ENCODE measurements at regions of chr5 and their contacts with region 1.

Region 1: DNA sequence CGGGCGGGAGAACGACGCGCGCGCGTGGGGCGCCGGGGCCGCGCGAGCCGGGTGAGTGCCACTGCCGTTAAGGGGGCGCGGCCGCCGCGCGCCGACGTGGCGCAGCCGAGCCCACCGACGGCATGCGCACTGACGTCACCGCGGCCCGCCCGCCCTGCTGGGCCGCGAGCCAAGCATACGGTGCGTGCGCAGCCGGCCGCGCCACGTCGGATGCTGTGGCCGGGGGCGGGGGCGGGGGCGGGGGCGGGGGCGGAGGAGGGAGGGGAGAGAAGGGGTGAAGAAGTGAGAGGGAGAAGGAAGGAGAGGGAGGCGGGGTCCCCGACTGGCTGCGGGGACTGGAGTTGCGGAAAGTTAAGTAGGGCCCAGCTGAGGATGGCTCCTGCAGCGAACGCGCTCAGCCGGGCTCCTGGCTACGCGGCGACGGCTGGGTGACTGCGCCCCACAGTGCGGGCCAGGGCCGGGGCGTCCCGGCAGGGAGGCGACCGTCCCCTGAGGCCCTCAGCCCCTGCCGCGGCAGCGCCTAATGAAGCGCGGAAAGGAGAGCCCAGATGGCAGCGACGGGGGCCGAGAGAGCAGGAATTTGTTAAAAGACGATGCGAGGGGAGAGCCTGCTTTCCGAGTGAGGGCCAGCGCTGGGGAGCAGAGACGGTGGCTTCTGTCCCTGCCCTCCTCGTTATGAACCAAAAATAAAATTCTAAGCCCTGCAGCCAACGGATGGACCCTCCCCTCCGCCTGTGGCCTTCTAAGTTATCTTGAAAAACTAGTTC is at the start of gene DAP:
- DNase-seq: peak; percentile 88
- ATAC-seq: peak; percentile 88
- H3K4me3 ChIP-seq: peak within 1 kb of the TSS; percentile 96
- H3K27ac ChIP-seq: peak within 1 kb of the TSS; percentile 99
- H3K4me1 ChIP-seq: peaks cover 27% of the 10 kb centered on the region
- H3K27me3 ChIP-seq: no peaks in the 10 kb centered on the region
- CTCF ChIP-seq: no peak
- POLR2A ChIP-seq: peak; percentile 87
- RAD21 ChIP-seq: no peak
- total RNA-seq, gene DAP: 44.4 and 49.6 TPM in 2 replicates

Region 2: DNA sequence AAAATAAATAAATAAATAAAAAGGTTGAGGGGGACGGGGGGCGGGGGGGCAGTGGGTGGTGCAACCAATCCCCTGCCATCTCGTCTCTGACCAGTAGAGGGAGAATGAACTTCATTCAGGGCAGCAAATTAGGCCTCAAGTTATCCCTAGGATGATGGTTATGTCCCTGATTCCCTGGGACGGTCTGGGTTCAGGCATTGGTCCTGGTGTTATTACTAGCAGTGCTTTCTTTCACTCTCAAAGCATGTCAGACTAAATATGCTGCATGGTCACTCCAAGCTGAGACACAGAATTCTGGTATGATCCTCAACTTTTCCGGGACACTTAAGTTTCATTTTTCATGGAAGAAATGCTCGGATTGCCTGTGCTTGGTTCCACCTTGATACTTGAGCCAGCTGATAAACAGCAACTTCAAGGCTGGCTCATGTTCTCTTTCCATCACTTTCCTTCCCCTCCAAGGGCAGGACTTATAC is 59.7 kb before region 1 on chr5:
- CTCF ChIA-PET with region 1: interaction called, 5 read pairs
- POLR2A ChIA-PET with region 1: no interaction called
- dilution Hi-C with region 1: no loop called
- in situ Hi-C with region 1: no loop called
- intact Hi-C with region 1: loop called (anchors 2 kb)
- DNase-seq: peak; percentile 71
- ATAC-seq: peak; percentile 57
- H3K4me3 ChIP-seq: no peak overlapping the region
- H3K27ac ChIP-seq: peak overlapping the region; percentile 44
- H3K4me1 ChIP-seq: peaks cover 28% of the 10 kb centered on the region
- H3K27me3 ChIP-seq: no peaks in the 10 kb centered on the region
- CTCF ChIP-seq: peak; percentile 50
- POLR2A ChIP-seq: no peak
- RAD21 ChIP-seq: peak; percentile 64

Region 3: DNA sequence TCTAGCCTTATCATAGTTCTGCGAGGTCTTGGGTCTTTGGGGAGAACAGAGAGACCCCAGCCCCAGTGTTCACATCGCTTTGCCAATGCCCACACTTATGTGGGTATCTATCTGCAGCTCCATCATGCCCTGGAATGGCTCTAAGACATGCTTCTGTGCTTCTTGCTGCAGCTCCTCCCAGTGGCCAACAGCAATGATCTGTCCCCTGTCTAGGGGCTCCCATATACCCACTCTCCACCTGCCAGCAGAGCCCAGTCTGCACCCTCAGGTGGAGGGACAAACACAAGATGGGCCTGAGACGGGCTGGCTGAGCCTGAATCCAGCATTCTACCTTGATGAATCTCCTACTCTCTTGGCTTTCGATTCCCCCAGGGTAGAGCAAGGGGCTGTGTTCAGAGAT is 14.3 kb after region 1 on chr5:
- CTCF ChIA-PET with region 1: no interaction called
- POLR2A ChIA-PET with region 1: no interaction called
- dilution Hi-C with region 1: no loop called
- in situ Hi-C with region 1: no loop called
- intact Hi-C with region 1: no loop called
- DNase-seq: no peak
- ATAC-seq: no peak
- H3K4me3 ChIP-seq: no peak overlapping the region
- H3K27ac ChIP-seq: no peak overlapping the region
- H3K4me1 ChIP-seq: peaks cover 1% of the 10 kb centered on the region; the same call in 1 of the 2 replicates
- H3K27me3 ChIP-seq: no peaks in the 10 kb centered on the region
- CTCF ChIP-seq: no peak
- POLR2A ChIP-seq: no peak
- RAD21 ChIP-seq: no peak

Region 4: GRCh38 chr5:10856683-10857337 is 95.5 kb after region 1 on chr5:
- CTCF ChIA-PET with region 1: interaction called, 4 read pairs
- POLR2A ChIA-PET with region 1: interaction called, 4 read pairs
- dilution Hi-C with region 1: no loop called
- in situ Hi-C with region 1: no loop called
- intact Hi-C with region 1: loop called (anchors 1 kb)
- DNase-seq: peak; percentile 77
- ATAC-seq: peak; percentile 90
- H3K4me3 ChIP-seq: no peak overlapping the region
- H3K27ac ChIP-seq: peak overlapping the region; percentile 1; the same call in 1 of the 2 replicates
- H3K4me1 ChIP-seq: peaks cover 18% of the 10 kb centered on the region
- H3K27me3 ChIP-seq: no peaks in the 10 kb centered on the region
- CTCF ChIP-seq: peak; percentile 85
- POLR2A ChIP-seq: no peak
- RAD21 ChIP-seq: peak; percentile 65

Region 5: DNA sequence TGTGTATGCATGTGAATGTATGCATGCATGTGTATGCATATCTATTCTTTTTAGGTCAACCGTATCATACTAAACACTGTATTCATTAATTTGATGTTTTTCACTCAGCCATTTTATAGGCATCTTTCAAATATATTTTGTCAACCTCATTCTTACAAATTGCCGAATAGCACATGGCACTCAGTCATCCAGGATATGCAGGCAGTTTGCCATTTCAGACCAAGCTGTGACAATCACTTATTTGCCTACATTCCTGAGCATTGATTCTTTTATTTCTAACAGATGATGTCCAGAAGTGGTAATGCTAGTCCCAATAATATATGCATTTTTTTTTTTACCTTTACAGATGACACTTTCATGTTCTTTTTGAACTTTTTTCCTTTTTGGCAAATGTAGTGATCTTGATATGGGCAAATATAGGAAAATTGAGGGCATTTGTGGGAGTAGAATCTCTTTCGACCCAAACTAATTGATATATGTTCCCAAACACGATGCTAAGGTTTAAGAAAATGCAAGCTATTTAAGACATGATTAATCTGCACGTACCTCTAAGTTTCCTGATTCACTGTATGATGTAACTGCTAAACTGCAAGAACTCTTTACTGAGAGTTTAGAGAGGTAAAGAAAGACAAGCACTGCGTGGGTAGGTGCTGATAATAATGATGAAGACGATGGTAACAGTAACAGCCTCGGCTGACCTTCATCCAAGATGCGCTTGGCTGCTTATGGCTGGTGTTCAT is 153.6 kb after region 1 on chr5:
- CTCF ChIA-PET with region 1: no interaction called
- POLR2A ChIA-PET with region 1: no interaction called
- dilution Hi-C with region 1: no loop called
- in situ Hi-C with region 1: no loop called
- intact Hi-C with region 1: loop called (anchors 5 kb)
- DNase-seq: no peak
- ATAC-seq: no peak
- H3K4me3 ChIP-seq: no peak overlapping the region
- H3K27ac ChIP-seq: no peak overlapping the region
- H3K4me1 ChIP-seq: peaks cover 2% of the 10 kb centered on the region
- H3K27me3 ChIP-seq: no peaks in the 10 kb centered on the region; the same call in 1 of the 2 replicates
- CTCF ChIP-seq: no peak
- POLR2A ChIP-seq: no peak
- RAD21 ChIP-seq: no peak

Region 6: DNA sequence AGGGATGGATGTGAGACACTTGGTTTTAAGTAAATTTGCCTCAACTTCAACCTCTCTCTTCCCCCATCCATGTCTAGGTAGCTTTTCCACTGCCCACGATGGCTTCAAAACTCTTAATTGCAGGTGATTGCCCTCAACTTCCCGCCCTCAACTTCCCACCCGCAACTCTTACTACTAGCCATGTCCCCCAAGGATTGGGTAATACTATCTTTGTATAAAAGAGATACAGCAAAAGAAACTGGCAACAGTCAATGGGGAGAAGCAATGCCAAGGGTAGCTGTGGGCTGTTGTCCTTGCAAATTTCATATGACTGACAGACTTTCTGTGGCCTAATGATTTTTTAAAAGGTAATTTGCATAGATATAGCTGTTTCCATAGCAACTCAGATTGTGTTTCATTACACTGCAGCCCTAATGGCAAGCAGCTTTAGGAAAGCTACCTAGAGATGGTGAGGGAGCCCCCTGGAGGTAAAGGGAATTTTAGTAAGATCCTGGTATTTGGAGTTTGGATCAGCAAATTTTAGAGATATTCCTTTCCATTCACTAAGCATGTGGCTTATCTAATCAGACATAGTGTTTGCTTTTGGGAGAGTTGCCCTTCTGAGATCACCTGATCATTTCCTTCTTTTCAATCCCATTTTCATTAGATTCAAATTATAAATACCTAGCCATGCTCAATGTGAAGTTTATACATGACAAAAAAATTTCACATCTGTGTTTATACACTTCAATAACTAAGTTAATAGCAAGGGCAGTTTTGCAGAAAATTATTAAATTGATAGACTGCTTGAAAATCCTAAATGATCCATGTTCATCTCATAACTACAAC is 421.3 kb after region 1 on chr5:
- CTCF ChIA-PET with region 1: no interaction called
- POLR2A ChIA-PET with region 1: no interaction called
- dilution Hi-C with region 1: no loop called
- in situ Hi-C with region 1: no loop called
- intact Hi-C with region 1: loop called (anchors 2 kb)
- DNase-seq: peak; percentile 47
- ATAC-seq: peak; percentile 69
- H3K4me3 ChIP-seq: no peak overlapping the region
- H3K27ac ChIP-seq: no peak overlapping the region
- H3K4me1 ChIP-seq: no peaks in the 10 kb centered on the region
- H3K27me3 ChIP-seq: no peaks in the 10 kb centered on the region
- CTCF ChIP-seq: peak; percentile 63
- POLR2A ChIP-seq: no peak
- RAD21 ChIP-seq: peak; percentile 72